Transverse colon (tissue), 4 donors: ENCODE measurements at regions of chr4 and their contacts with region 1.

Region 1: DNA sequence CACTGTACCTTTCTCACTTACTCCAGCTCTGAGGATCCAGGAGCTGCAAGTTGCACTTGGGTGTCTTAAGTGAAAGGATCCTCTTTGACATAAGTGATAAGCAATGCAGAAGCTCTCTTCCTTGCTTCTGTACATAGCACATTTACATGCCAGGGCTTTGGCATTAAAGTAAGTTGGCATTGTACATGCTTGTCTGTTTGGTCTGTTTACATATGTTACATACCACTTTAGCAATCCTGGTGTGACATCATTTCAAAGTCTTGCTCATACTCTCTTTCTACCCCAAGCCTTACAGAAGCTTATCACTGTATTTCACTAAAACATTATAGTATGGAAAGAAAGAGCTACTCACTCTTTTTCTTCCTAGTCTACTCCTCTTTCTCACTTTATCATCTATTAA is 2548.3 kb downstream of the ARAP2 start:
- DNase-seq: no peak
- H3K4me3 ChIP-seq: no peak overlapping the region
- H3K27ac ChIP-seq: no peak overlapping the region
- H3K4me1 ChIP-seq: no peaks in the 10 kb centered on the region
- H3K27me3 ChIP-seq: no peaks in the 10 kb centered on the region
- CTCF ChIP-seq: no peak
- EP300 ChIP-seq: no peak
- POLR2A ChIP-seq: no peak

Region 2: DNA sequence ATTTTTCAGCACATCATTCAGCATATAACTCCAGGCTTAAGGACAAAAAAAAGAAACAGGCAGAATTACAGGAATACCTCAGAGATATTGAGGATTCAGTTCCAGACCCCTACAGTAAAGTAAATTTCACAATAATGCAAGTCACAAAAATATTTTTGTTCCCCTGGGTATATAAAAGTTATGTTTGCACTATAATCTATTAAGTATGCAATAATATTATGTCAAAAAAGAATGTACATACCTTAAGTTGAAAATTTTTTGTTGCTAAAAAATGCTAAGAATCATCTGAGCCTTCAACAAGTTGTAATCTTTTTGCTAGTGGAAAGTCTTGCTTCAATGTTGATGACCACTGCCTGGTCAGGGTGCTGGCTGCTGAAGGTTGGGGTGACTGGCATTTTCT is 15.8 kb after region 1 on chr4:
- in situ Hi-C with region 1: no loop called
- intact Hi-C with region 1: loop called (anchors 1 kb)
- DNase-seq: no peak
- H3K4me3 ChIP-seq: no peak overlapping the region
- H3K27ac ChIP-seq: no peak overlapping the region
- H3K4me1 ChIP-seq: no peaks in the 10 kb centered on the region
- H3K27me3 ChIP-seq: no peaks in the 10 kb centered on the region
- CTCF ChIP-seq: no peak
- EP300 ChIP-seq: no peak
- POLR2A ChIP-seq: no peak